ENCODE measurements at regions of chr6 and their contacts with region 1.

Region 1: GRCh38 chr6:24774696-24775519 is at the start of gene GMNN:
- DNase-seq: peak; percentile 98 to 100 (median 99)

Region 2: DNA sequence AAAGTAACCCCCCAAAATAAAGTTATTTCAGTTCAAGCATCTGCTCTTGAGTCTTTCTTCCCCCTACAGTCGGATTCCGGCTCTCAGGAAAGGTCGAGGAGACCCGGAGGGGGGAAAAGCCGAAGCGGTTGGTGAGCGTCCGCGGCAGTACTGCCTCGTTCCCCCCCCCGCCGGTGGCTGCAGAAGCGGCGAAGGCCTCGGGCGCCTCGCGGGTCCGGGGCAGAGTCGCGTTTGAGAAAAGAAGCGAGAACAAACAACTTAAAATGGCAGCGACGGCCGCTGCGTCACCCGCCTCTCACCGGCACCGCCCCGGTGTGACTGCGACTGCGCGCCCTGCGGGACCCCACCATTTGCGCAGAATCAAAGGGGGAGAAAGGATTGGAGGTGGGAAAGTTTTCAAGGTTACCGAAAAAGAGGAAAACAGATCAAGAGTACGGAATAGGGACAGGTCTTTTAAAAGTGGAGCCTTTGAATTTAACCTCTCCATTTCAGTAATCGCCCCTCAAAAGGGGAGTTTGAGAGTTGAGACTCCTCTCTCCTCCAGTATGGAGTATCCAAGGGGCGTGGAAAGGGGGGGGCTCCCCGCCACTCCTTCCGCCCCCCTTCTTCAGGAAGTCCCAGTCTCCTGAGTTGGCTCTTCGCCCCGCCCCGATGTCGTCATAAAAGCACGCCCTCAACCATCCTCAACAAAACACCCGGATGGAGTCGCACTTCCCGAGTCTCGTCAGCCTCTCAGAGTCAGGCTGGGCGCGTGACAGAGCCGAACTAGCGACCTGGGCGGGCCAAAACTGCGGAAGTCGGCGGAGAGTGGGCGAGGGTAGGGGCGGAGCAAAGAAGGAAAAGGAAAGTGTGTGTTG is 54.1 kb before region 1 on chr6:
- intact Hi-C with region 1: loop called (anchors 2 kb)
- DNase-seq: peak; percentile 98 to 100 (median 100)

Region 3: DNA sequence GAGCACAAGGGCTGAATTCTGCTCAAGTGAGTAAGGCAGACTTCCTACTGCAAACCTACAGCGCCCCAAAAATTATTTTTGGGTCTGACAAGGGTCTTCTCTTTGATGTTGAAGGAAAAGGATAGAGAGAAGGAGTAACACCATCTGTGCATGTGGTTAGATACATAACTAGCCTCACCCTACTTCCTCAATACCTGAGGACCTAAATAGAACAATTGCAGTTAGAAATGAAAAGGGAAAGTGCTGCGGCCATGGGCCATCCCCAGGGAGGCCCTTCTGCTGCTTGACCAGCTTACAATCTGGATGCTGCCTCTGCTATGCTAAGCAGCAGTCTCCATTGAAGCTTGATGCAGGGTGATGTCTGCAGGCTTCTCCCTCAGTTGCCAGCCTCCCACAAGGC is 87.0 kb after region 1 on chr6:
- intact Hi-C with region 1: no loop called
- DNase-seq: no peak